Common myeloid progenitor, CD34-positive (primary cell): ENCODE measurements at regions of chr5 and their contacts with region 1.

Region 1: DNA sequence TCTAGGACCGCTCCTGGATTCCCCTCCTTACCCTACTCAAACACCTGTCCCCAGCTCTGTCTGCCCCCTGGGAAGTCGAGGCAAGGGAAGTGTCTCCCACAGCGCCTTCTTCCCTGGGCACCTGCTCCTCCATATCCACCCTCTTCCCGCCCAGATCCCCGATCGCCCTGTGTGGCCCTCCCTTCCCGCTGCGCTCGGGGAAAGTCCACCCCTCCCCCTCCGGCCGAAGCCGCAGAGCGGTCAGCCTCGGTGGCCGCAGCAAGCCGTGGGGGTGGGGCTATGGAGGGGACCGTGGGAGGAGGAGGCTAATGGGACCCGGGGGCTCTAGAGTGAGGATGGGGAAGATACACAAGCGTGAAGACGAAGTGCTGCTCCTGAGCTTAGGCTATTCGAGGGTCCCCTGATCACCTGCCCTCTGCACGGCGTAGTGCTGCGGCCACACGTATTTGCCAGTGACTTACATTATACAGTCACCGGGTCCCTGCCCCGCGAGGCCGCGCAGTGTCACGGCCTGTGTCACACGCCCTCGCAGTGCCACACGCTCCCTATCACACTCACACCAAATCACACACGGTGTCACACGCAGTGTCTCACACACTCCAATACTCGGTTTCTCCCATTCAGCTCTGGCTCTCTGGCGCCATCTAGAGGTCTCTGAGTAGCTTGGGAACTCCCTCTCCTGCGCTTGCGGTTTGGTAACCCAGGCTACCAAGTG is 658 bp upstream of the PCDH1 start:
- DNase-seq: peak; percentile 92 to 97 (median 95)
- H3K4me3 ChIP-seq: peak overlapping the region in 3 of 7 experiments; percentile 30 to 60 (median 48)
- H3K27ac ChIP-seq: no peak overlapping the region
- H3K4me1 ChIP-seq: peaks cover 0 to 40% (median 30%) of the 10 kb centered on the region in 4 experiments
- H3K27me3 ChIP-seq: peaks cover 6 to 97% (median 54%) of the 10 kb centered on the region in 5 experiments

Region 2: DNA sequence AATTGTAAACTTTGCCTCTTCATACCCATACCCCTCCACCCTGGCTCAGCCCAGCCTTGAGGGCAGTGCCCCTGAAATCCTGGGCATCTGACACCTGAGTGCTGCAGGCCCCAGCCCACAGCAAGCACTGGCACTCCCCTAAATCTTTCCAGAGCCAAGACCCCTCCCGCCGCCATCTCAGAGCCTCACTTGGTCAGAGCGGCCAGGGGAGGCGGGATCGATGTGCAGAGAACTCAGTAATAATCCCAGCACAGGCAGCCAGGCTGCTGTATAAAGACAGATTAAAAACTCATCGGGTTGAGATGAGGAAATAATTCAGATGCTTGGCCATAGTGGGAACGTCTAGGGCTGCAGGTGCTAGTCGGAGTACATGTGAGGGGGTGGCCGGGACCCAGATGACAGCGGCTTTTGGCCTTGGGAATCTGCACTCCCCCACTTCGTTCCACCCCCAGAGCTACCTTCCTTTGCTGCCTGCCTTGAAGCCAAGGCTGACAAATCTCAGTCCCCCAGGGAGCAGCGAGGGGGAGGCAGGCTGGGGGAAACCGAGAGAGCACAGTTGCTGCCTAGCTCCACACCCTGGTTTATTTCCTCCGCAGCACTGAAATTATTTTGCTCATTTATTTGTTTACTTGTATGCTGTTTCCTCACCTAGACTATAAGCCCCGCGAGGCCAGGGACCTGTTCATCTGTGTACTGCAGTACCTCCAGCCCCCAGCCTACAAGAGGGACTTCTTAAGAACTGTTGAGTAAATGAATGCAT is 177.3 kb before region 1 on chr5:
- CTCF ChIA-PET with region 1: interaction called, 108 read pairs
- POLR2A ChIA-PET with region 1: interaction called, 3 read pairs
- DNase-seq: peak in 1 of 3 donors; percentile 29
- H3K4me3 ChIP-seq: peak overlapping the region in 1 of 7 experiments; percentile 76
- H3K27ac ChIP-seq: no peak overlapping the region
- H3K4me1 ChIP-seq: peaks cover 2 to 15% (median 10%) of the 10 kb centered on the region in 4 experiments
- H3K27me3 ChIP-seq: peaks cover 9 to 78% (median 57%) of the 10 kb centered on the region in 5 experiments

Region 3: DNA sequence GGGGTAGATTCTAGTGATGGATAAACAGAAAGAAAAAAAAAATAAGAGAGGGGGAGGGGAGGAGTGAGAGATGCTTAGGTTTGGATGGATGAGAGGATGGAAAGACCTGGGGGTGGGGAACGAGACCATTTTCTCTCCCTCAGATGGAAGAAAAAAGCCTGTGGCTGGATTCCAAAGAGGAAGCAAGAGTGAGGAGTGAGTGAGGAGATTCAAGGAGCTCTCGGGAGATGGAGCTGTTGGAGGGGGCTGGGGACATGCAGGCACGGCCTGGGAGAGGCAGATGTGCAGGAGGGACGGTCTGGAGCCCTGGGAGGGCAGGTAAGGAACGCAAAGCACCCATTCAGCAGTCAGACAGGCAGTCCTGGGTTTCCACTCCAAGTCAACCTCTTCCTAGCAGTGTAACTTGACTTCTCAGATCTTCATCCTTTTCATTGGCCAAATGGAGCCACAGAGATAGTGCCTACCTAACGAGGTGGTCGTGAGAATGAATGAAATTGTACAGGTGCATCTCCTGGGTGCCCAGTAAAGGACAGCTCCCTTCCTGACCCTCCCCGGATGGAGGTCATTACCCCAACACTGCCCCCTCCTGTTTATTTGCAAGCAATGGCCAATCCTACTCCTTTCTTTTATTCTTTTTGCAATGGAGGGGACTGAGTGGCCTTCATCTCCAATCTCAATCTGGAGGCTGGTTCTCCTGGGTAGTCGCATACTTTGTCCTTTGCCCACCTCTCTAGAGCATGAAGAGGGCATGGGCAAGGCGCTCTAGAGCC is 52.9 kb before region 1 on chr5:
- CTCF ChIA-PET with region 1: interaction called, 25 read pairs
- POLR2A ChIA-PET with region 1: no interaction called
- DNase-seq: no peak
- H3K4me3 ChIP-seq: no peak overlapping the region
- H3K27ac ChIP-seq: no peak overlapping the region
- H3K4me1 ChIP-seq: peaks cover 0 to 8% (median 3%) of the 10 kb centered on the region in 4 experiments
- H3K27me3 ChIP-seq: peaks cover 0 to 3% (median 0%) of the 10 kb centered on the region in 5 experiments

Region 4: GRCh38 chr5:141846031-141846430 is 32.8 kb before region 1 on chr5:
- CTCF ChIA-PET with region 1: interaction called, 28 read pairs
- POLR2A ChIA-PET with region 1: interaction called, 3 read pairs
- DNase-seq: peak in 2 of 3 donors; percentile 17 to 41
- H3K4me3 ChIP-seq: no peak overlapping the region
- H3K27ac ChIP-seq: no peak overlapping the region
- H3K4me1 ChIP-seq: peaks cover 0 to 19% (median 15%) of the 10 kb centered on the region in 4 experiments
- H3K27me3 ChIP-seq: peaks cover 0 to 6% (median 0%) of the 10 kb centered on the region in 5 experiments

Region 5: DNA sequence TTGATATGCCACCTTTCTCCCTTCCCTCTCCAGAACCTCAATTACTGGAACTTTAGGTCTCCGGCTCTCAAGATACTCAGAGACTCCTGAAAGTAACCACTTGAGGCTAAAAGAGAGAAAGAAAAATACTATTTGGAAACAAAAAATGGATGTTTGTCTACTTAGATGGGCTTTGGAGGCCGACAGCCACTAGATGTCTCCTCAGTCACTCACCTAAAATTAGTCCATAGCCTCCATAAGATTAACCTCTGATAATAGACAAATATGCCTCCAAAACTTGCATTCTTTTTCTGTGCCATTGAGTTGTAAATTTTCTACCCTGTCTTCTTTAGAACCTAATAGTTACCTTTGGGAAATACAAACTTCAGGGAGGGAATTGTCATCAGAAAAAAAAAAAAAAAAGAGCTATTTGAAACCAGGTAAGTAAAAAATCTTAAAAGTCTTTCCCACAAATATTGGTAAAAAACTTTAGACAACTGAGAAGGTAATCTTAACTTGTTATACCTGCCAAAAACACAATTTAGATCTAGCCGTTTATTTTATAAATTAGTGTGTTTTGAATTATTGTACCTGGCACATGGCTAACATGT is 10.5 kb after region 1 on chr5:
- CTCF ChIA-PET with region 1: interaction called, 25 read pairs
- POLR2A ChIA-PET with region 1: no interaction called
- DNase-seq: peak in 2 of 3 donors; percentile 41 to 43
- H3K4me3 ChIP-seq: no peak overlapping the region
- H3K27ac ChIP-seq: no peak overlapping the region
- H3K4me1 ChIP-seq: no peaks in the 10 kb centered on the region
- H3K27me3 ChIP-seq: peaks cover 7 to 22% (median 11%) of the 10 kb centered on the region in 5 experiments

Region 6: DNA sequence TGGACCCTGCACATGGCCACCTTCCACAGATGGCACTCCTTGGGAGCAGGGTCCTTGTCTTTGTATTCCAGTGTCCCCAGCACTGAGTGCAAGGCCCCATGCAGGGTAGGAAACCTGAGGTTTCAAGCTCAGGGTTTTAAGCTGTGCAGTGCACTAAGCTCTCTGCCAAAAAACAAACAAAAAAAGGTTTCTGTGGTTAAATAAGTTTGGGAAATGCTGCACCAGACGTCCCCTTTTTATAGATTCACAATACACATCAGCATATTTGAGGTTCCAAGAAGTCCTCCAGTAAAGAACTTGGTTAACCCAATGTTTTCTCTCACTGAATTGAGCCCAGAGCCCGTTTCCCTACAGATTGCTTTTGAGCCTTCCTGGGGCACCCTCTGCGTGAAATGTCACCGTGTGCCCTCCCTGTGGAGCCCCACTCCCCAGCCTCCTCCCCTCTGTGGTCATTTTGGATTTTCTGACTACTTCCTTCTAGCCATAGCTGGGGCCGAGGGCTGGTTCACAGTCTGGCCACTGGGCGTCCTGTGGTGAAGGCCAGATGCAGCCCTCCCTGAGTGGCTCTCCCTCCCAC is 61.9 kb after region 1 on chr5:
- CTCF ChIA-PET with region 1: interaction called, 10 read pairs
- POLR2A ChIA-PET with region 1: no interaction called
- DNase-seq: peak in 2 of 3 donors; percentile 15 to 28
- H3K4me3 ChIP-seq: no peak overlapping the region
- H3K27ac ChIP-seq: no peak overlapping the region
- H3K4me1 ChIP-seq: peaks cover 0 to 19% (median 14%) of the 10 kb centered on the region in 4 experiments
- H3K27me3 ChIP-seq: no peaks in the 10 kb centered on the region